Activated CD4-positive, alpha-beta T cell treated with anti-CD3 and anti-CD28 coated beads, Interleukin-2, amount 10 ng/mL, durations not matched to agents 24 days and 14 days (primary cell): ENCODE measurements at regions of chr14 and their contacts with region 1.

Region 1: DNA sequence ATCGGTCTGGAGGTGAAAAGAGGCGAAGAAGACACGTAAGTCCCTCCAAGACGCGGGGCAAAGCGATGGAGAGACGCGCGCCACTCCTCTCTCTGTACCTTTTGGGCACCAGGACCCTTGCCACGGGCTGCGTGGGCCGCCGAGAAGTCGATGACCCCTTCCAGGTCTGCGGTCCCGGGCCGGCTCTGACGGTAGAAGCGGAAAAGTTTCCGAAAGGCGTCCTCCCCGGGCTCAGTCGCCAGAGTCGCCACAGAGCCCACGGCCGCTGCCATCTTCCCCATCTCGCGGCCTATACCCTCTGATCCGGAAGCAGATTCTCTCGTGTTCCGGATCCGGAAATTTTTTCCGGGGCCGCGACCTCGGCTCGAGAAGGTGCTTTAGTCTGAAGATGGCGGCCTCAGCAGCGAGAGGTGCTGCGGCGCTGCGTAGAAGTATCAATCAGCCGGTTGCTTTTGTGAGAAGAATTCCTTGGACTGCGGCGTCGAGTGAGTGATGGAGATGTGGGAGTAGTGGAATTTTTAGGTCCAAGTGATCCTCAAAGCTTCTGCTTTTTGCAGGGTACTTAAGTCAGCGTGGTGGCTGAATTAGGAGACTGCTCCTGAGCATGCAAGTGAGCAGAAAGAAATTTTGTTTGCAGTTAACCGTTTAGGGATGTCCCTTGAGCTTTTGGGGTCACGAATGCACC is at the starts of genes ALKBH1 and SLIRP:
- DNase-seq: peak; percentile 97
- H3K4me3 Mint-ChIP-seq: peak within 1 kb of the TSS; percentile 82
- H3K27ac Mint-ChIP-seq: peak within 1 kb of the TSS; percentile 91
- H3K4me1 Mint-ChIP-seq: peaks cover 29% of the 10 kb centered on the region
- H3K27me3 Mint-ChIP-seq: no peaks in the 10 kb centered on the region
- total RNA-seq, gene ALKBH1: 17.9 and 19.2 TPM in 2 replicates
- total RNA-seq, gene SLIRP: 184 and 190 TPM in 2 replicates

Region 2: DNA sequence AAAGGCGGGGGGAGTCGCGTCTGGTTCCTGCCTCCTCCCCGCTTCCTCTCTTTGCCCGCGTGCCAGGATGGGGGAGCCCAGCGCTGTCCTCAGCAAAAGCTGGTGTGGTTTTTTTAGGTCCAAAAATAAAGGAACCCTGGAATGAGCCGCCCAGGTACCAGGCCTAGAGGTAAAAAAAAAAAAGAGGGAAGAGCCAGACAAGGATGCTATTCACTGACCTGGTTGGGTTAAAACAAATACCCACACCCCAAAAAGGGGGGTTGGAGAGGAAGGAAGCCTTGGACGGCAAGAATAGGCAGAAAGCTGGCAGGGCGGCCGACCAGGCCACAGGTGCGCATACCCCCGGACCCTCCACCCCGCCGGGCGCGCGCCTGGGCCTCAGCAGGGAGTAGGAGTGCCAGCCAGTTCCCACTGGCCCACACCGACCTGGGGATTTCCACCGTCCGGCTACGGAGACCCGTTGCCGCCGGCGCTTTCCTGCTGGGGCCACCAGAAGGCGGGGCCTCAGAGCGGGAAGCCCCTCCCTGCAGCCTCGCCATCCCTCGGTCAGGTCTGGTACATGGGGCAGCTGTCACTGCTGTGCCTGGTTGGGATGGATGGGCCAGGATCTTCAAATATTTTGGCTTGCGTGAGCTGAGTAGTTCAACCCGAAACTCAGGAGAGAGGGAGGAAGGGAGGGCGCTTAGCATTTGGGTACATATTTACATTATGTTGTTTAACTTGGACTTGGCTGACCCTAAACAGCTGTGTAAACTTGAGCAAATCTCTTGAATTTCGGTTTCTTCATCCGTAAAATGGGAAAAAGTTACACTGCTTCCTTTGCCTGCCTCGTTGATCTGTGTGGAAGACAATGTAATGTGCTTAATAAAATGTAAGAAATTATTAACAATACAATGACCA is 674.0 kb before region 1 on chr14:
- intact Hi-C with region 1: loop called (anchors 5 kb)
- DNase-seq: peak; percentile 94
- H3K4me3 Mint-ChIP-seq: peak overlapping the region; percentile 89
- H3K27ac Mint-ChIP-seq: peak overlapping the region; percentile 99
- H3K4me1 Mint-ChIP-seq: peaks cover 73% of the 10 kb centered on the region
- H3K27me3 Mint-ChIP-seq: no peaks in the 10 kb centered on the region

Region 3: GRCh38 chr14:77376771-77377501 is 330.9 kb before region 1 on chr14 and contains the starts of genes SAMD15 and TMED8:
- intact Hi-C with region 1: loop called (anchors 1 kb)
- DNase-seq: peak; percentile 95
- H3K4me3 Mint-ChIP-seq: peak within 1 kb of the TSS; percentile 93
- H3K27ac Mint-ChIP-seq: peak within 1 kb of the TSS; percentile 92
- H3K4me1 Mint-ChIP-seq: peaks cover 29% of the 10 kb centered on the region
- H3K27me3 Mint-ChIP-seq: peaks cover 16% of the 10 kb centered on the region
- total RNA-seq, gene SAMD15: 0.28 and 0.63 TPM in 2 replicates
- total RNA-seq, gene TMED8: 31.1 and 32.1 TPM in 2 replicates

Region 4: DNA sequence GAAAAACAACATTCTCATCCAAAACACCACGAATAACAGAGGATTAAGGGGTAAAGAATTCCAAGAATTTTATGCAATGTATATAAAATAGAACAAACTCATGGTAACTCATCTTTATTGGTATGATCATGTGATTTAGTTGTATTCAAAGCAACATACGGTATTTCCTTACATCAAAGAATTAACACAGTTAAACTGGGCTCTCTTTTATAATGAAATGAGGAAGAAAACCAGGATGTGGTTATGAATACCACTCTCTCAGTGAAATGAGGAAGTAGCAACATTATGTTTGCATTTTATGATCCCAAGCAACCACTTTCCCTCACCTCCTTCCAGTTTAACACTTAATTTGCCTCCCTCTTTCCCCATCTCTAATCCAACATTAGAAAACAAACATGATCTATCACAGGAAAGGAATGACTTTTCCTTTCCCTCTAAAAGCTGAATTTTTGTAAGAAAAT is 114.3 kb before region 1 on chr14:
- intact Hi-C with region 1: loop called (anchors 5 kb)
- DNase-seq: no peak
- H3K4me3 Mint-ChIP-seq: peak overlapping the region; percentile 66
- H3K27ac Mint-ChIP-seq: peak overlapping the region; percentile 90
- H3K4me1 Mint-ChIP-seq: peaks cover 44% of the 10 kb centered on the region
- H3K27me3 Mint-ChIP-seq: no peaks in the 10 kb centered on the region

Region 5: DNA sequence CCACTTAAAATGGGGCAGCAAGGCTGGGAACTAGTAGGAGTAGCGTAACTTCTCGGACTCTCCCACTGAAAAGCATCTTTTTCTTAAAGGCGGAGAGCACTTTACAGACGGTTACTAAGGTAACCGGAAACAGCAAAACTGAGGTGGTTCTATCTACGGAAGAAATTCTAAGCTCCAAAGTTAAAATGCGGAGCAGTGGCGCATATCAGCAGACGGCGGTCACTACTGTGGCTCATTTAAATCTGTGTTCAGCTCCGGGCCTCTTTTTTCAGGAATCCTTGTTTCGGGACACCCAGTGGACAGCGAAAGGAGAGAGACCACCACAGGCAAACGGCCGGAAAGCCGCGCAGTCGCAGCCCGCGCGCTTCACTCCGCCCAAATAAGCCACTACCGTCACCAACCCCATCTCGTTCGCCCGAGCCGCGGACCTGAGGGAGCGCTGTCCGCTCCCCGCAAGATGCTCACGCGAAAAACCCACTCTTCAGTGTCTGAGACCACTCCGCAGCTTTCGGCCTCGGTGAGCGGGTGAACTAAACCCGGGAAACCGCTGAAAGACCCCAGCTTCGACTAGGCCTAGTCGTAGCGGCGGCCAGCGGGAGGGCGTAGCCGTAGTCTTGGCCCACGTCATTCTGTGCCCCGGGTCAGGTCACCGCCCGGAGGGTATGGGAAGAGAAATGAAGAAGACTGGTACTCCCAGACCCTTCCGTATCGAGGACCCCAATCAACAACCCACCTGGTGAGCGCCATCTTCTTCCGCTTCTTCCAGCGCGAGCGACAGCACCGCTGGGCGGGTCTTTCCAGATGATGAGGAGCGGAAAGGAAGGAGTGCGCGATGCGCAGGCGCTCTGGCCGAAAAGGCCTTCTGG is 52.7 kb after region 1 on chr14 and contains the start of gene SNW1:
- intact Hi-C with region 1: loop called (anchors 1 kb)
- DNase-seq: peak; percentile 97
- H3K4me3 Mint-ChIP-seq: peak within 1 kb of the TSS; percentile 94
- H3K27ac Mint-ChIP-seq: peak within 1 kb of the TSS; percentile 99
- H3K4me1 Mint-ChIP-seq: peaks cover 25% of the 10 kb centered on the region
- H3K27me3 Mint-ChIP-seq: peaks cover 6% of the 10 kb centered on the region
- total RNA-seq, gene SNW1: 121 TPM in 2 replicates